Mammary epithelial cell (primary cell): ENCODE measurements at regions of chr18 and their contacts with region 1.

Region 1: GRCh38 chr18:68660354-68661183 is 54.3 kb downstream of the TMX3 start:
- DNase-seq: peak; percentile 27
- H3K4me3 ChIP-seq: no peak overlapping the region
- H3K27ac ChIP-seq: no peak overlapping the region
- H3K4me1 ChIP-seq: no peaks in the 10 kb centered on the region
- H3K27me3 ChIP-seq: no peaks in the 10 kb centered on the region
- CTCF ChIP-seq: peak; percentile 51 to 58

Region 2: DNA sequence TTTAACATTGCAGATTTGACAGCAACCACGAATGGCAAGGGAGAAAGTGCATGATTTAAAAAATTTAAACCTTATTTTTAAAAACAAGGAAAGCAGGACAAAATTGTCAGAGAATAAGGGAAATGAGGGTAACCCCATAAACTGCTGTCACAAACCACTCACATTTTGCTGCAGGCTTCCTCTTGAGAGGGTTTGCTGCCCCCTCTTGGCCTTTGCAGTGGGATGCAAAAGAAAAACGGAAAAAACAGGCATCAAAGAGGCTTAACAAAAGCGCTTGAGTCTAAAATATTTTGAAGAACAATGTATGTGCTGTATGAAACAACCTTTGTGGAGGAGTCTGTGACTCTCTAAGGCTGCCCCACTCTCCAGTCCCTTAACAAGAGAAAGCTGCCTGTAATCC is 37.2 kb before region 1 on chr18:
- CTCF ChIA-PET with region 1: no interaction called
- dilution Hi-C with region 1: no loop called
- in situ Hi-C with region 1: no loop called
- intact Hi-C with region 1: no loop called
- DNase-seq: peak; percentile 45
- H3K4me3 ChIP-seq: no peak overlapping the region
- H3K27ac ChIP-seq: no peak overlapping the region
- H3K4me1 ChIP-seq: no peaks in the 10 kb centered on the region
- H3K27me3 ChIP-seq: no peaks in the 10 kb centered on the region
- CTCF ChIP-seq: peak; percentile 81 to 89

Region 3: GRCh38 chr18:68735483-68736343 is 75.1 kb after region 1 on chr18:
- CTCF ChIA-PET with region 1: no interaction called
- dilution Hi-C with region 1: no loop called
- in situ Hi-C with region 1: no loop called
- intact Hi-C with region 1: loop called (anchors 2 kb)
- DNase-seq: peak; percentile 37
- H3K4me3 ChIP-seq: no peak overlapping the region
- H3K27ac ChIP-seq: no peak overlapping the region
- H3K4me1 ChIP-seq: no peaks in the 10 kb centered on the region
- H3K27me3 ChIP-seq: no peaks in the 10 kb centered on the region
- CTCF ChIP-seq: peak; percentile 82 to 96